ENCODE measurements at regions of chr5 and their contacts with region 1.

Region 1: GRCh38 chr5:154461531-154461930 is 15.7 kb downstream of the SAP30L start:
- DNase-seq: no peak
- H3K4me3 ChIP-seq: no peak overlapping the region
- H3K27ac ChIP-seq: no peak overlapping the region
- H3K4me1 ChIP-seq: peaks cover 0 to 3% (median 0%) of the 10 kb centered on the region in 4 experiments; a peak in 3 of 7 replicates
- H3K27me3 ChIP-seq: peaks cover 0 to 3% (median under 1%) of the 10 kb centered on the region in 4 experiments; a peak in 1 of 7 replicates
- CTCF ChIP-seq: peak; percentile 14 to 53 (median 42); a peak in 3 of 4 replicates
- EP300 ChIP-seq: no peak
- POLR2A ChIP-seq: no peak
- RAD21 ChIP-seq: peak; percentile 52 to 60

Region 2: DNA sequence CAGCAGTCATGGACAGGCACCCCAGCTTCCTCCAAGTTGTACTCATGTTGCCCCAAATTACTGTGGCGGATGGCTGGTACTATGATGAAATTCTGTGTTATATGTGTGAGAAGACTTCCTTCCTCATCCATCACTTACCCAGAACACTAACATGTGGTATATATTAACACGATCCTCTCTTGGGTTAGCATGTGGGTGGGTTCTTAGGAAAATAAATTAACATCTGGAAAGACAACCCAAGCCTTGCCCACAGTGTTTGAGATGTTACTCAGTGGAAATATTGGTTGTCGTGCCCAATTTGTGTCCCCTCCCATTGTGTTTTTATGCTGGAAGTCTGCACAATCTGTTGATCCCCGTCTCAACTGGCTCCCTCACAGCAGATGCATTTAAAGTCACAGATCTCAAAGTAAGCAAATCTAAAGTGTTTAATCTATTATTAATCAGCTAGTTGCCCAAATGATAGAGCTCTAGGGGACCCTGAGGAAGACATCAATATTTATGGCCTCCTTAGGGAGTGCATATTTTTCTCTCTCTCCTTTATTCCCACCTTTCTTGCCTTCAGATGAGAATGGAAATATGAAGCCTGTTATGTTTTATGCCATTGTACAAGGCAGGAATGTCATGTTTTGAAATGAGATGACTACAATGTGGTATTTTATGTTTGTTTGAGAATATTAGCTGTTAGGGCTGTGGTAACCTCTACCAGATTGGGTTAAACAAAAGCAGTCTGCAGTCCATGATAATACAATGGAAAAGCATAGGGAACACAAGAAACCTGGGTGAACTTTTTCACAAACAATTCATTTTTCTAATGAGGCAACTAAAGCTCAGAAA is 877.2 kb before region 1 on chr5:
- CTCF ChIA-PET with region 1: no interaction called
- POLR2A ChIA-PET with region 1: no interaction called
- DNase-seq: no peak
- H3K4me3 ChIP-seq: no peak overlapping the region
- H3K27ac ChIP-seq: no peak overlapping the region
- H3K4me1 ChIP-seq: no peaks in the 10 kb centered on the region
- H3K27me3 ChIP-seq: no peaks in the 10 kb centered on the region
- CTCF ChIP-seq: no peak
- EP300 ChIP-seq: no peak
- POLR2A ChIP-seq: no peak
- RAD21 ChIP-seq: no peak

Region 3: GRCh38 chr5:153974131-153974812 is 487.3 kb before region 1 on chr5:
- CTCF ChIA-PET with region 1: interaction called, 15 read pairs
- POLR2A ChIA-PET with region 1: no interaction called
- DNase-seq: peak in 1 of 2 experiments; percentile 60
- H3K4me3 ChIP-seq: no peak overlapping the region
- H3K27ac ChIP-seq: no peak overlapping the region
- H3K4me1 ChIP-seq: no peaks in the 10 kb centered on the region
- H3K27me3 ChIP-seq: peaks cover 0 to 2% (median 0%) of the 10 kb centered on the region in 4 experiments; a peak in 1 of 7 replicates
- CTCF ChIP-seq: peak in 2 of 3 experiments; percentile 71 to 74; a peak in 3 of 4 replicates
- EP300 ChIP-seq: no peak
- POLR2A ChIP-seq: no peak
- RAD21 ChIP-seq: peak; percentile 93 to 96

Region 4: GRCh38 chr5:154260224-154260927 is 201.2 kb before region 1 on chr5:
- CTCF ChIA-PET with region 1: no interaction called
- POLR2A ChIA-PET with region 1: no interaction called
- DNase-seq: no peak
- H3K4me3 ChIP-seq: no peak overlapping the region
- H3K27ac ChIP-seq: no peak overlapping the region
- H3K4me1 ChIP-seq: peaks cover 0 to 15% (median 11%) of the 10 kb centered on the region in 4 experiments; a peak in 3 of 7 replicates
- H3K27me3 ChIP-seq: no peaks in the 10 kb centered on the region
- CTCF ChIP-seq: no peak
- EP300 ChIP-seq: no peak
- POLR2A ChIP-seq: no peak
- RAD21 ChIP-seq: no peak

Region 5: DNA sequence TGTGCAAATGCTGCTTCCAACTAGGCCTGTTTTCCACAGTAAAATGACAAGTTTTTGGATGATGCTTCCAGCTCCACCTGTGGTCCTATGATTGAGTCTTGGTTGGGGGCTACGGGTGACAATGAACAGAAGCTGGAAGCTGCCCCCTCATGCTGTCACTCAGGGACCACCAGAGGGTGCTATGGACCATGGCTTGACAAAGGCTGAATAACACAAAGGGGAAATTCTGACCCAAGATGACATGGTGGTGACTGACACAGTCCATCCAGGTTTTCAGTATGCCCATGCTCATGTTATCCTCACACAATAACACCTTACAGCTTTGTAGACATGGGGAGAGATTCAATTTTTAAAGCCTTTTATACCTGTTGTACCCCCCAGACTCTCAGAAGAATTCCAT is 39.7 kb before region 1 on chr5:
- CTCF ChIA-PET with region 1: interaction called, 42 read pairs
- POLR2A ChIA-PET with region 1: no interaction called
- DNase-seq: no peak
- H3K4me3 ChIP-seq: no peak overlapping the region
- H3K27ac ChIP-seq: no peak overlapping the region
- H3K4me1 ChIP-seq: peaks cover 0 to 4% (median 0%) of the 10 kb centered on the region in 4 experiments; a peak in 1 of 7 replicates
- H3K27me3 ChIP-seq: no peaks in the 10 kb centered on the region
- CTCF ChIP-seq: peak; percentile 71 to 83 (median 77)
- EP300 ChIP-seq: no peak
- POLR2A ChIP-seq: no peak
- RAD21 ChIP-seq: peak; percentile 87 to 88

Region 6: GRCh38 chr5:154430466-154430865 is 31.1 kb before region 1 on chr5:
- CTCF ChIA-PET with region 1: interaction called, 11 read pairs
- POLR2A ChIA-PET with region 1: interaction called, 3 read pairs
- DNase-seq: no peak
- H3K4me3 ChIP-seq: no peak overlapping the region
- H3K27ac ChIP-seq: no peak overlapping the region
- H3K4me1 ChIP-seq: no peaks in the 10 kb centered on the region
- H3K27me3 ChIP-seq: no peaks in the 10 kb centered on the region
- CTCF ChIP-seq: no peak
- EP300 ChIP-seq: no peak
- POLR2A ChIP-seq: no peak
- RAD21 ChIP-seq: no peak

Region 7: GRCh38 chr5:154445422-154446182 is 15.9 kb before region 1 on chr5 and contains the start of gene SAP30L:
- CTCF ChIA-PET with region 1: interaction called, 67 read pairs
- POLR2A ChIA-PET with region 1: interaction called, 3 read pairs
- DNase-seq: peak; percentile 68 to 99
- H3K4me3 ChIP-seq: peak within 1 kb of the TSS; percentile 80 to 93 (median 92)
- H3K27ac ChIP-seq: no peak within 1 kb of the TSS
- H3K4me1 ChIP-seq: peaks cover 0 to 7% (median 2%) of the 10 kb centered on the region in 4 experiments; a peak in 3 of 7 replicates
- H3K27me3 ChIP-seq: peaks cover 0 to 3% (median 0%) of the 10 kb centered on the region in 4 experiments; a peak in 1 of 7 replicates
- CTCF ChIP-seq: no peak
- EP300 ChIP-seq: no peak
- POLR2A ChIP-seq: no peak
- RAD21 ChIP-seq: no peak
- total RNA-seq, gene SAP30L: 26.3 and 31.5 TPM in 2 replicates

Measured in H1 (cell line).